ENCODE measurements at regions of chr6 and their contacts with region 1.

Region 1: DNA sequence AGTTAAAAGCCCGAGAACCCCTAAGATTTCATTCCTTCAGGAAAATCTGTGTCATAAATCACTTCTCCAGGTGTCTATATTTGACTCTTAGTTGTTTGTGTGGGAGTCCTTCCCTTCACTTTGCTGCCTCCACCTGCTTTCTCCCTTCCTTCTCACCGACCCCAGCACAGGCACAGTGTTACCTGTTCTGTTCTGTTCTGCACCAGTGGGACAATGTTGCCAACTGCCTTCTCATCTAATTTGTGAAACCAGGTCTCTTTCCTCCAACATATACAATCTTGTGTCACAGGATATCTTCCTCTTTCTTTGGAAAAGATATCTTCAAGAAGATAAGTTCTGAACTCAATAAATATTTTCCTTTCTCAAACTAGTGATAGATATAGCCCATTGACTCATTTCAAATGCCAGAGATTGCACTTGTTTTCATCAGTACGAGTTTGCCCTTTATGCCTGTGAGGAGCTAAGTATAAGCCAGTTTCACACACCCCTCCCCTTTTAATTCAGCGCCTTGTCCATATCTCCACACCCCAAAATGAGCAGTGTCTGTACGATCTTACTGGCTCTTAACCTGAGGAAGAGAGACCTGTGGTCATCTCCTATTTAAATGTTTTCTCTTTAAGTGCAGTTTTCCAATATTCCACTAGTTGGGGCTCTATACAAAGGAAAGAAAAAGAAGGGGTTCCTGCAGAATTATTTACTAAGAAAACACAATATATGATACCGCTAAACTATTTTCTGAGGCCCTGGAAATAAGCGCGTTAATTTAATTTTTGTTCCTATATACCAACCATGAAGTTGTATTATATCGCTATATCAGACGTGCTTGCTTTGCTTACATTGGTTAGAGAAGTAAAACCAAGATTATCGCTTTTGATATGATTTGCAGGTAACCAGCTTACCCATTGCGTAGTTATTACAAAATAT is 81.6 kb upstream of the PREP start:
- DNase-seq: no peak
- ATAC-seq: peak in 4 of 8 donors; percentile 45 to 60 (median 49)
- H3K4me3 ChIP-seq: peak overlapping the region in 2 of 10 donors; percentile 22 to 27
- H3K27ac ChIP-seq: peak overlapping the region in 1 of 10 donors; percentile 23
- H3K4me1 ChIP-seq: peaks cover 0 to 52% (median 24%) of the 10 kb centered on the region in 9 donors
- H3K27me3 ChIP-seq: no peaks in the 10 kb centered on the region
- CTCF ChIP-seq: peak; percentile 83 to 97 (median 93)

Region 2: GRCh38 chr6:105733565-105734162 is 249.2 kb after region 1 on chr6:
- intact Hi-C with region 1: loop called in 8 of 10 experiments (anchors 5 to 10 kb)
- DNase-seq: no peak
- ATAC-seq: no peak
- H3K4me3 ChIP-seq: no peak overlapping the region
- H3K27ac ChIP-seq: no peak overlapping the region
- H3K4me1 ChIP-seq: peaks cover 0 to 7% (median 0%) of the 10 kb centered on the region in 9 donors
- H3K27me3 ChIP-seq: no peaks in the 10 kb centered on the region
- CTCF ChIP-seq: peak; percentile 29 to 77 (median 69)

Region 3: GRCh38 chr6:105992315-105992961 is 507.9 kb after region 1 on chr6:
- intact Hi-C with region 1: loop called in 4 of 10 experiments (anchors 5 to 10 kb)
- DNase-seq: peak; percentile 74 to 86
- ATAC-seq: peak; percentile 91 to 96 (median 94)
- H3K4me3 ChIP-seq: peak overlapping the region; percentile 51 to 74 (median 64)
- H3K27ac ChIP-seq: peak overlapping the region in 6 of 10 donors; percentile 4 to 85 (median 66)
- H3K4me1 ChIP-seq: peaks cover 3 to 44% (median 34%) of the 10 kb centered on the region in 9 donors
- H3K27me3 ChIP-seq: peaks cover 0 to 100% (median 98%) of the 10 kb centered on the region in 7 donors
- CTCF ChIP-seq: no peak

Region 4: DNA sequence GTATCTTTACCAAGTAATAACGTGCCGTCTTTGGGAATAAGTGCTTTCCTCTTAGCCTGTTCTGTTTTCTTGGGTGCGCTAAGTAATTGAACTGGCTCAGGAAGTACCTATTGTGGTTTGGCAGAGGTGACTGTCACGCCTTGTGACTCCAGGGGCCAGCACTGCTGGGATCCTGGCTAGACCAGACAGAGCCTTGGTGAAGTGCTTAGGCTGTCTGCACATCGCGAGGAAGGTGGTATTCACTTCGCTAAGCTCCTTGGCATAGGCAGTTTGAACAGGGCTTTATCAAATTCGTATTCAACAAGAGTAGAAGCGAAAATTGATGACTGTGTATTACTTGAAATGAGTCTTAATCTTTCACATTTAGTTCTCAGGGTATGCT is 619.2 kb after region 1 on chr6:
- intact Hi-C with region 1: loop called in 1 of 10 experiments (anchors 1 kb)
- DNase-seq: no peak
- ATAC-seq: peak in 5 of 8 donors; percentile 31 to 52 (median 48)
- H3K4me3 ChIP-seq: peak overlapping the region in 9 of 10 donors; percentile 4 to 56 (median 34)
- H3K27ac ChIP-seq: peak overlapping the region in 9 of 10 donors; percentile 23 to 89 (median 57)
- H3K4me1 ChIP-seq: peaks cover 0 to 34% (median 6%) of the 10 kb centered on the region in 9 donors
- H3K27me3 ChIP-seq: peaks cover 0 to 40% (median 21%) of the 10 kb centered on the region in 7 donors
- CTCF ChIP-seq: no peak

Region 5: GRCh38 chr6:106290954-106291353 is 806.5 kb after region 1 on chr6:
- intact Hi-C with region 1: loop called in 1 of 10 experiments (anchors 10 kb)
- DNase-seq: no peak
- ATAC-seq: no peak
- H3K4me3 ChIP-seq: no peak overlapping the region
- H3K27ac ChIP-seq: no peak overlapping the region
- H3K4me1 ChIP-seq: no peaks in the 10 kb centered on the region
- H3K27me3 ChIP-seq: no peaks in the 10 kb centered on the region
- CTCF ChIP-seq: no peak